Gastrocnemius medialis (tissue), 4 donors: ENCODE measurements at regions of chr1 and their contacts with region 1.

Region 1: GRCh38 chr1:1374929-1375662 is at the start of gene AURKAIP1:
- DNase-seq: peak; percentile 99
- ATAC-seq: peak; percentile 95 to 97
- H3K4me3 ChIP-seq: peak within 1 kb of the TSS; percentile 80 to 95 (median 94)
- H3K27ac ChIP-seq: peak within 1 kb of the TSS; percentile 83 to 96 (median 94)
- H3K4me1 ChIP-seq: peaks cover 28 to 38% of the 10 kb centered on the region in 2 donors
- H3K27me3 ChIP-seq: no peaks in the 10 kb centered on the region
- CTCF ChIP-seq: peak; percentile 23 to 37 (median 30)
- POLR2A ChIP-seq: peak; percentile 67 to 79
- total RNA-seq, gene AURKAIP1: 165 to 450 (median 234) TPM

Region 2: GRCh38 chr1:1273512-1274298 is 101.4 kb before region 1 on chr1 and contains the start of gene UBE2J2:
- in situ Hi-C with region 1: no loop called
- intact Hi-C with region 1: loop called (anchors 5 kb)
- DNase-seq: peak; percentile 93
- ATAC-seq: peak; percentile 92 to 95
- H3K4me3 ChIP-seq: peak within 1 kb of the TSS; percentile 79 to 92 (median 88)
- H3K27ac ChIP-seq: peak within 1 kb of the TSS; percentile 83 to 93 (median 90)
- H3K4me1 ChIP-seq: peaks cover 34 to 43% of the 10 kb centered on the region in 2 donors
- H3K27me3 ChIP-seq: no peaks in the 10 kb centered on the region
- CTCF ChIP-seq: no peak
- POLR2A ChIP-seq: peak; percentile 75 to 88
- total RNA-seq, gene UBE2J2: 31.3 to 42.3 (median 38.3) TPM

Region 3: GRCh38 chr1:1318131-1318652 is 56.9 kb before region 1 on chr1:
- in situ Hi-C with region 1: no loop called
- intact Hi-C with region 1: no loop called
- DNase-seq: peak; percentile 83 to 93
- ATAC-seq: peak; percentile 96 to 97
- H3K4me3 ChIP-seq: no peak overlapping the region
- H3K27ac ChIP-seq: peak overlapping the region; percentile 74 to 91 (median 86)
- H3K4me1 ChIP-seq: peaks cover 38 to 45% of the 10 kb centered on the region in 2 donors
- H3K27me3 ChIP-seq: no peaks in the 10 kb centered on the region
- CTCF ChIP-seq: no peak
- POLR2A ChIP-seq: no peak

Region 4: GRCh38 chr1:1349256-1350012 is 25.7 kb before region 1 on chr1 and contains the start of gene DVL1:
- in situ Hi-C with region 1: no loop called
- intact Hi-C with region 1: loop called (anchors 1 kb)
- DNase-seq: no peak
- ATAC-seq: peak; percentile 48 to 57
- H3K4me3 ChIP-seq: peak within 1 kb of the TSS; percentile 61 to 89 (median 72)
- H3K27ac ChIP-seq: peak within 1 kb of the TSS; percentile 96 to 99 (median 98)
- H3K4me1 ChIP-seq: peaks cover 50 to 58% of the 10 kb centered on the region in 2 donors
- H3K27me3 ChIP-seq: peaks cover 0 to 10% (median 0%) of the 10 kb centered on the region in 3 donors
- CTCF ChIP-seq: peak; percentile 39 to 77 (median 63)
- POLR2A ChIP-seq: peak; percentile 75 to 81
- total RNA-seq, gene DVL1: 196 to 311 (median 258) TPM

Region 5: DNA sequence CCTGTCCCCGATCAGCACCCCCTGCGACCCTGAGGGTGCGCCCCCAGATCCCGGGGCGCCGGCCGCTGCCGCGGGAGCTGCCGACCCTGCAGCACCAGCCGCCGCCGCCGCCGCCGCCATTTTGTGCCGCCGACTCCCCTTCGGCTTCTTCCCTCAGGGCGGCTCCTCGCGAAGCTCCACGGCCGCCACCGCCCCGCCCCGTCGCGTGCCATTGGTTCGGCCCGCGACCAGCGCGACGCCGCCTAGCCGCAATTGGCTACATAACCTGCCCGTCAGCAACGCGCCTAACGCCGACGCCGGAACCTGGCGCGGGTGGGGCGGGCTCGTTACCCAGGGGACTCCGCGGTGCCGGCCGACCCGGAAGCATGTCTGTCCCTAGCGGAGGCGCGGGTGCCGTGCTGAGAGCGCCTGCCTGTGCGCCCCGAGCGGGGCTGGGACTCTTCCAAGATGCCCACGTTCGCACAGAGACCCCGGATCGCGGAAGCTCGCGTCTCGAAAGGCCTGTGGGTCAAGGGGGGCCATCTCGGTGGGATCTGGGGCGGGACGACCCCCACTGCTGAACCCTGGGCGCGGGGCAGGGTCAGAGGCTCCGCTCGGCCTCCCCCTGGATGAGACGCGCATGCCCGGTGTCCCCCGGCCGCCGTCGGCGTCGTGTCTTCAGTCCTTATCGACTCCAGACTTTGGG is 24.2 kb after region 1 on chr1 and contains the start of gene CCNL2:
- in situ Hi-C with region 1: no loop called
- intact Hi-C with region 1: loop called (anchors 1 kb)
- DNase-seq: peak; percentile 96 to 98
- ATAC-seq: peak; percentile 89 to 93
- H3K4me3 ChIP-seq: peak within 1 kb of the TSS; percentile 65 to 98 (median 84)
- H3K27ac ChIP-seq: peak within 1 kb of the TSS; percentile 80 to 96 (median 92)
- H3K4me1 ChIP-seq: peaks cover 37 to 39% of the 10 kb centered on the region in 2 donors
- H3K27me3 ChIP-seq: no peaks in the 10 kb centered on the region
- CTCF ChIP-seq: peak; percentile 80 to 82 (median 82)
- POLR2A ChIP-seq: peak; percentile 81 to 89
- total RNA-seq, gene CCNL2: 35.0 to 91.1 (median 43.7) TPM

Region 6: DNA sequence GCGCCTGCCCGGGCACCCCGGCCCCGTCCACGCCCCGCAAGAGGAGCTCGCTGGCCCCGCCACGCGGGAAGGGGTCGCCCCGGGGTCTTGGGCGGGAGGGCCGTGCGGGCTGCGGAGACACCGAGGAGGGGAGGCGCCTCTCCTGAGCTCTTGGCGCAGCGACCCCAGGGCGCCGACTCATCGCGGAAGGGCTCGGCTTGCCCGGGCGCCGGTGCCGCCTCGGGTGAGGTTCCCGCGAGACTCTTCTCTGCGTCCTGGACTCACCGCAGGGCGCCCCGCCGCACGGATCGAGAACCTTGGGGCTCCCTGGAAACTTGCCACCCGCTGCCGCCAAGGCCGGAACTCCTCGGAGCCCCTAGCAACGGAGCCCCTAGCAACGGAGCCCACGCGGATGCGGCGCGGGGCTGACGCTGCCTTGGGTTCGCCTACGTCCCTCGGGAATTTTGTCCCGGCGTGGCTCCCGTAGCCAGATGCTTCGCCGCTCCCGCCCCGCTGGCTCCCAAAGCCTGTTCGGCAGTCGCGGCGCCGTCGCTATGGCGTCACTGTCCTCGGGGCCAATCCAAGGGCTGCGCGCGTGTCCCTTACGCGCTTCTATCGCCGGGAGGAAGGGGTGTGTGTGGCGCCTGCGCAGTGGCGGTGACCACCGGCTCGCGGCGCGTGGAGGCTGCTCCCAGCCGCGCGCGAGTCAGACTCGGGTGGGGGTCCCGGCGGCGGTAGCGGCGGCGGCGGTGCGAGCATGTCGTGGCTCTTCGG is 136.6 kb after region 1 on chr1 and contains the start of gene ATAD3A:
- in situ Hi-C with region 1: no loop called
- intact Hi-C with region 1: loop called (anchors 10 kb)
- DNase-seq: peak; percentile 97 to 98
- ATAC-seq: peak; percentile 92 to 93
- H3K4me3 ChIP-seq: peak within 1 kb of the TSS; percentile 81 to 99 (median 94)
- H3K27ac ChIP-seq: peak within 1 kb of the TSS; percentile 93 to 100 (median 96)
- H3K4me1 ChIP-seq: peaks cover 6 to 13% of the 10 kb centered on the region in 2 donors
- H3K27me3 ChIP-seq: no peaks in the 10 kb centered on the region
- CTCF ChIP-seq: peak in 3 of 5 experiments; percentile 9 to 46 (median 27)
- POLR2A ChIP-seq: peak; percentile 84 to 91
- total RNA-seq, gene ATAD3A: 22.9 to 47.9 (median 35.6) TPM